WTC11 (cell line): ENCODE measurements at regions of chr15 and their contacts with region 1.

Region 1: DNA sequence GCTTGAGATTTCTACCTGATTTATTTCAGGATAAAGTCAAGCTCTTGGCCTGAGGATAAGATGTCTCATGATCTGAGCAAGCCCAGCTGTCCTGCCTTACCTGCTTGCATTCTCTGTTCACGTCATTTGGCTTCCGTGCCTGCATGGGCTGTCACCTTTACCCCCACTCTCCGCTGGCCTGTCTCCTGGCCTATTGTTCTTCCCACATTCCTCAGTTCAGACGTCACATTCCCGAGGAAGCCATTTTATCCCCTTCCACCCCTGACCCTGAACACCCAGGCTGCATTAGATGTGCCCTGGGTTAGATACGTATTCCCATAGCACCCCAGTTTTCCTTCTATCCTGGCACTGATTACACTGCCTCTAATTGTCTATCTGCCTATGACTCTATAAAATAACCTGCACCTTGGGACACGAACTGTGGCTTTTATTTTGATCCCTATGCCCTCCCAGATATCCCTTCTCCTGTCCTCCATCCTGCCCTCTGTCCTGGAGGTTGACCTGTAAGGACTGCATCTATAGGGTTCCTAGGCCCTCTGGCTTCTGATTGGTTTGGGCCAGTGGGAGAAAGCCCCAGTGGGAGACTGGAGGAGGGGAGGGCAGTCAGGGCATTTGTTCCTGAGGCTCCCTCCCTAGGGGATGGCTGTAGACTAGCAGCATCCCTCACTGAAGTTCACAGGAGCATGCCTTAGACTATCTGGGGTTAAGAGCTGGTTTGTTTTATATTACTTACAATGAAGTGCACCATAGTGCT is 19.2 kb upstream of the UBE2Q2 start:
- DNase-seq: peak; percentile 68
- ATAC-seq: peak; percentile 90
- H3K4me3 Mint-ChIP-seq: peak overlapping the region; percentile 5
- H3K27ac Mint-ChIP-seq: peak overlapping the region; percentile 76
- H3K4me1 Mint-ChIP-seq: peaks cover 14% of the 10 kb centered on the region
- H3K27me3 Mint-ChIP-seq: peaks cover 2% of the 10 kb centered on the region
- CTCF ChIP-seq: no peak

Region 2: GRCh38 chr15:75842722-75843551 is 18.9 kb after region 1 on chr15 and contains the start of gene UBE2Q2:
- CTCF ChIA-PET with region 1: interaction called, 15 read pairs
- POLR2A ChIA-PET with region 1: no interaction called
- DNase-seq: peak; percentile 84
- ATAC-seq: peak; percentile 63
- H3K4me3 Mint-ChIP-seq: peak within 1 kb of the TSS; percentile 97
- H3K27ac Mint-ChIP-seq: peak within 1 kb of the TSS; percentile 94
- H3K4me1 Mint-ChIP-seq: peaks cover 41% of the 10 kb centered on the region
- H3K27me3 Mint-ChIP-seq: peaks cover 20% of the 10 kb centered on the region
- CTCF ChIP-seq: no peak
- total RNA-seq, gene UBE2Q2: 26.1 to 28.2 TPM (median 27.0 TPM) in 3 replicates

Region 3: DNA sequence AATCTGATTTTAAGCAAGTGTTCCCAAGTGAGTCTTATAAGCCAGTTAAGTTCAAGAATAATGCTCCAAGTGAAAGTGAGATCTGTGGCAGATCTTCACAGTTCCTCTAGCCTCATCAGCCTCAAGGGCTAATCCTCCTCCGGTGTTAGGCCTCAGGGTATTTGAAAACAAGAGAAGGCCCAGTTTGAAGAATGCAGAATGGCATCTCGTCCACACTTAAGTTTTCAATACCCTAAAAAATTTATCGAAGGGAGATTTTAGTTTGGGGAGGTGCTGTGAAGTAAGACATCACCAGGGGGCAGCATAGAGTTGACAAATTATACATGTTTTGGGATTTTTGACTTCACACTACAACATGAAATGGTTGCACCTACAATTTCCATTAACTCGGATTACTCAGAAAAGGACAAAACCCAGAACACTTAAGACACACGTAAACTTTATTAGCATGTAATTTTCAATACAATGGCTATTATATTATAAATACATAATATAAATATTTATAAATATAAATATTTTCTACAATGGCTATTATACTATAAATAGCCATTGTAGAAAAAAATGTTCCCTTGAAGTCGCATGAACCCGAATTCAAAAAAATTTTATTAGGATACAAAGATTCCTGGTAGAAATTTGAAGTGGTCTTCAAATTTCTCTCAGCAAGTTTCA is 233.4 kb after region 1 on chr15:
- CTCF ChIA-PET with region 1: no interaction called
- POLR2A ChIA-PET with region 1: interaction called, 10 read pairs
- DNase-seq: peak; percentile 26
- ATAC-seq: no peak
- H3K4me3 Mint-ChIP-seq: peak overlapping the region; percentile 35
- H3K27ac Mint-ChIP-seq: no peak overlapping the region
- H3K4me1 Mint-ChIP-seq: peaks cover 39% of the 10 kb centered on the region
- H3K27me3 Mint-ChIP-seq: peaks cover 16% of the 10 kb centered on the region
- CTCF ChIP-seq: peak; percentile 59

Region 4: GRCh38 chr15:76150971-76151598 is 327.0 kb after region 1 on chr15:
- CTCF ChIA-PET with region 1: no interaction called
- POLR2A ChIA-PET with region 1: no interaction called
- DNase-seq: peak; percentile 90
- ATAC-seq: peak; percentile 83
- H3K4me3 Mint-ChIP-seq: peak overlapping the region; percentile 24
- H3K27ac Mint-ChIP-seq: peak overlapping the region; percentile 79
- H3K4me1 Mint-ChIP-seq: peaks cover 47% of the 10 kb centered on the region
- H3K27me3 Mint-ChIP-seq: no peaks in the 10 kb centered on the region
- CTCF ChIP-seq: peak; percentile 92